ENCODE measurements at regions of chr4 and their contacts with region 1.

Region 1: GRCh38 chr4:164866817-164867490 is 10.0 kb upstream of the APELA start:
- DNase-seq: no peak
- ATAC-seq: no peak
- H3K4me3 ChIP-seq: no peak overlapping the region
- H3K27ac ChIP-seq: no peak overlapping the region
- H3K4me1 ChIP-seq: no peaks in the 10 kb centered on the region
- H3K27me3 ChIP-seq: peaks cover 4% of the 10 kb centered on the region; the same call in 1 of the 2 replicates
- CTCF ChIP-seq: no peak

Region 2: DNA sequence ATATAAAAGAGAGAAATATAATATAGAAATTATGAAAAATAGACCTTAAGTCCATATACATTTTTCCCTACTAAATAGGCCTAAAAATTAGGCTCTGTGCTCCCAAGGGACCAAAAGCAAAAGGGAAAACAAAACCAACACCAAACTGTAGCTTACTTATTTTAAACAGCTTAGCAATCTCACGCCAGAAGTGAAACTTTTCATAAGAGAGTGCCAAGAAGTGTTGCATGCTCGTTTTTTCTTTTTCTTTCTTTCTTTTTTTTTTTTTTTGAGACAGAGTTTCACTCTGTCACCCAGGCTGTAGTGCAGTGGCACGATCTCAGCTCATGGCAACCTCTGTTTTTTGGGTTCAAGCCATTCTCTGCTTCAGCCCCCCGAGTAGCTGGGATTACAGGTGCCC is 1122.1 kb before region 1 on chr4:
- CTCF ChIA-PET with region 1: no interaction called
- POLR2A ChIA-PET with region 1: interaction called, 14 read pairs
- intact Hi-C with region 1: no loop called
- DNase-seq: no peak
- ATAC-seq: no peak
- H3K4me3 ChIP-seq: no peak overlapping the region
- H3K27ac ChIP-seq: no peak overlapping the region
- H3K4me1 ChIP-seq: no peaks in the 10 kb centered on the region
- H3K27me3 ChIP-seq: no peaks in the 10 kb centered on the region
- CTCF ChIP-seq: no peak

Region 3: DNA sequence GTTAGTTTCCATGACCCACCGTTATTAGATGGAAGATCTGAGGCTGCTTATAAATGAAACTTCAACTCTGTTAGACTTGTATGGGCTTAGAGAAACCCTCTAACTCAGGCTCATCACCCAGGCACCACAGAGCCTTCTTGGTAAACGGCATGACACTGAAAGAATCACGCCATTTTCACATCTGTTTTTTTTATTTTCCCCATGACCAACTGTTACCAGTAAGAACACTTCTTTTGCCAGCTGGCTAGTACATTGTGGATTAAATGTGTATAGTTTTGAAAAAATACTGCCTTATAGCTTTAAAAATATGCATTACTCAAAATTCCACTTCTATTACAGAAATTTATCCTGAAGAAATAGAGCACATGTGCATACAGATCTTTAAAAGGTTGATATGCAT is 38.0 kb before region 1 on chr4:
- CTCF ChIA-PET with region 1: no interaction called
- POLR2A ChIA-PET with region 1: no interaction called
- intact Hi-C with region 1: no loop called
- DNase-seq: no peak
- ATAC-seq: no peak
- H3K4me3 ChIP-seq: no peak overlapping the region
- H3K27ac ChIP-seq: no peak overlapping the region
- H3K4me1 ChIP-seq: no peaks in the 10 kb centered on the region
- H3K27me3 ChIP-seq: 0 out of 2 replicates have a peak, but pooled peaks cover 2% of the 10 kb centered on the region
- CTCF ChIP-seq: no peak